Mammary epithelial cell (primary cell): ENCODE measurements at regions of chrX and their contacts with region 1.

Region 1: GRCh38 chrX:111244235-111244750 is 26.0 kb downstream of the CAPN6 start:
- DNase-seq: peak; percentile 5
- H3K4me3 ChIP-seq: no peak overlapping the region
- H3K27ac ChIP-seq: no peak overlapping the region
- H3K4me1 ChIP-seq: no peaks in the 10 kb centered on the region
- H3K27me3 ChIP-seq: no peaks in the 10 kb centered on the region
- CTCF ChIP-seq: peak; percentile 62 to 63

Region 2: GRCh38 chrX:110992611-110993010 is 251.7 kb before region 1 on chrX:
- CTCF ChIA-PET with region 1: no interaction called
- dilution Hi-C with region 1: no loop called
- in situ Hi-C with region 1: no loop called
- intact Hi-C with region 1: loop called (anchors 2 kb)
- DNase-seq: peak; percentile 20
- H3K4me3 ChIP-seq: no peak overlapping the region
- H3K27ac ChIP-seq: no peak overlapping the region
- H3K4me1 ChIP-seq: no peaks in the 10 kb centered on the region
- H3K27me3 ChIP-seq: no peaks in the 10 kb centered on the region
- CTCF ChIP-seq: peak; percentile 59 to 72

Region 3: GRCh38 chrX:111168314-111168713 is 76.0 kb before region 1 on chrX:
- CTCF ChIA-PET with region 1: no interaction called
- dilution Hi-C with region 1: no loop called
- in situ Hi-C with region 1: no loop called
- intact Hi-C with region 1: loop called (anchors 1 kb)
- DNase-seq: peak; percentile 12
- H3K4me3 ChIP-seq: no peak overlapping the region
- H3K27ac ChIP-seq: no peak overlapping the region
- H3K4me1 ChIP-seq: no peaks in the 10 kb centered on the region
- H3K27me3 ChIP-seq: no peaks in the 10 kb centered on the region
- CTCF ChIP-seq: peak in 1 of 2 donors; percentile 49